ENCODE measurements at regions of chr17 and their contacts with region 1.

Region 1: DNA sequence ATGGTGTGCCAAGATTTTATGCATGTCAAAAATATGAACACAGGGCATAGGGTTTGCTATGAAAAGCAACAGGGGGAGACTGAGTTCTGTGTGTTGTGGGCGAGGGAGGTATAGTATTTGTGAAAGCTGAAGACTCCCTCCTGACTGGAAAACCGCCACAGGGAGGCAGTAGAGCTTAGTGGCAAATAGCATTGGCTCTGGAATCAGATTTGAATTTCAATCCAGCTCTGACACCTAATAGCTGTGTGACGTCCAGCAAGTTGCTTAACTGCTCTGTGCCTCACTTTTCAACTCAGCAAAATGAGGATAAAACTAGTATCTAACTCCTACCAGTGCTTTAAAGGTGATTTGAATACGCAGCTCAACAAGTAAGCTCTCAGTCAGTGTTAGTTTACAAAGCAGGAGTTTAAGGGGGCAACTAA is 22.0 kb downstream of the KPNA2 start:
- DNase-seq: peak in 7 of 9 donors; percentile 23 to 56 (median 44)
- ATAC-seq: peak; percentile 84
- H3K4me3 ChIP-seq: no peak overlapping the region
- H3K4me3 Mint-ChIP-seq: no peak overlapping the region
- H3K27ac ChIP-seq: no peak overlapping the region
- H3K27ac Mint-ChIP-seq: peak overlapping the region in 1 of 9 donors; percentile 49
- H3K4me1 ChIP-seq: no peaks in the 10 kb centered on the region
- H3K4me1 Mint-ChIP-seq: peaks cover 0 to 16% (median 10%) of the 10 kb centered on the region in 7 donors
- H3K27me3 ChIP-seq: no peaks in the 10 kb centered on the region
- H3K27me3 Mint-ChIP-seq: peaks cover 0 to 7% (median 0%) of the 10 kb centered on the region in 5 donors

Region 2: GRCh38 chr17:68172461-68172954 is 115.0 kb after region 1 on chr17:
- CTCF ChIA-PET with region 1: interaction called, 6 read pairs
- POLR2A ChIA-PET with region 1: no interaction called
- intact Hi-C with region 1: loop called in 1 of 2 experiments (anchors 5 kb)
- DNase-seq: peak; percentile 45 to 74 (median 67)
- ATAC-seq: peak; percentile 92
- H3K4me3 ChIP-seq: no peak overlapping the region
- H3K4me3 Mint-ChIP-seq: no peak overlapping the region
- H3K27ac ChIP-seq: no peak overlapping the region
- H3K27ac Mint-ChIP-seq: no peak overlapping the region
- H3K4me1 ChIP-seq: peaks cover 0 to 7% of the 10 kb centered on the region in 2 donors
- H3K4me1 Mint-ChIP-seq: peaks cover 14 to 38% (median 20%) of the 10 kb centered on the region in 7 donors
- H3K27me3 ChIP-seq: no peaks in the 10 kb centered on the region
- H3K27me3 Mint-ChIP-seq: peaks cover 0 to 1% (median 0%) of the 10 kb centered on the region in 5 donors

Region 3: GRCh38 chr17:68443972-68444459 is 386.5 kb after region 1 on chr17:
- CTCF ChIA-PET with region 1: interaction called, 10 read pairs
- POLR2A ChIA-PET with region 1: no interaction called
- intact Hi-C with region 1: no loop called
- DNase-seq: no peak
- ATAC-seq: no peak
- H3K4me3 ChIP-seq: no peak overlapping the region
- H3K4me3 Mint-ChIP-seq: no peak overlapping the region
- H3K27ac ChIP-seq: no peak overlapping the region
- H3K27ac Mint-ChIP-seq: no peak overlapping the region
- H3K4me1 ChIP-seq: peaks cover 0 to 11% of the 10 kb centered on the region in 2 donors
- H3K4me1 Mint-ChIP-seq: peaks cover 13 to 40% (median 16%) of the 10 kb centered on the region in 7 donors
- H3K27me3 ChIP-seq: no peaks in the 10 kb centered on the region
- H3K27me3 Mint-ChIP-seq: no peaks in the 10 kb centered on the region

Measured in naive thymus-derived CD4-positive, alpha-beta T cell (primary cell).